HCT116 (cell line): ENCODE measurements at regions of chr19 and their contacts with region 1.

Region 1: GRCh38 chr19:45643024-45643926 is 4.1 kb upstream of the EML2 start:
- DNase-seq: peak; percentile 71
- ATAC-seq: no peak
- H3K4me3 ChIP-seq: peak overlapping the region; percentile 53; a peak in 3 of 4 replicates
- H3K27ac ChIP-seq: peak overlapping the region; percentile 79; the same call in 1 of the 2 replicates
- H3K4me1 ChIP-seq: peaks cover 28 to 68% of the 10 kb centered on the region in 2 experiments
- H3K27me3 ChIP-seq: no peaks in the 10 kb centered on the region
- CTCF ChIP-seq: peak; percentile 97 to 99 (median 99)
- POLR2A ChIP-seq: peak; percentile 21
- RAD21 ChIP-seq: peak; percentile 98

Region 2: GRCh38 chr19:45423589-45424190 is 219.6 kb before region 1 on chr19 and contains the start of gene ERCC1:
- CTCF ChIA-PET with region 1: interaction called, 3 read pairs
- POLR2A ChIA-PET with region 1: interaction called, 3 read pairs
- RAD21 ChIA-PET with region 1: no interaction called
- intact Hi-C with region 1: loop called (anchors 1 kb)
- DNase-seq: peak; percentile 96
- ATAC-seq: peak; percentile 82
- H3K4me3 ChIP-seq: peak within 1 kb of the TSS; percentile 93 to 96
- H3K27ac ChIP-seq: peak within 1 kb of the TSS; percentile 99
- H3K4me1 ChIP-seq: peaks cover 38 to 77% of the 10 kb centered on the region in 2 experiments
- H3K27me3 ChIP-seq: no peaks in the 10 kb centered on the region
- CTCF ChIP-seq: no peak
- POLR2A ChIP-seq: peak; percentile 84
- RAD21 ChIP-seq: no peak
- total RNA-seq, gene ERCC1: 103 TPM

Region 3: DNA sequence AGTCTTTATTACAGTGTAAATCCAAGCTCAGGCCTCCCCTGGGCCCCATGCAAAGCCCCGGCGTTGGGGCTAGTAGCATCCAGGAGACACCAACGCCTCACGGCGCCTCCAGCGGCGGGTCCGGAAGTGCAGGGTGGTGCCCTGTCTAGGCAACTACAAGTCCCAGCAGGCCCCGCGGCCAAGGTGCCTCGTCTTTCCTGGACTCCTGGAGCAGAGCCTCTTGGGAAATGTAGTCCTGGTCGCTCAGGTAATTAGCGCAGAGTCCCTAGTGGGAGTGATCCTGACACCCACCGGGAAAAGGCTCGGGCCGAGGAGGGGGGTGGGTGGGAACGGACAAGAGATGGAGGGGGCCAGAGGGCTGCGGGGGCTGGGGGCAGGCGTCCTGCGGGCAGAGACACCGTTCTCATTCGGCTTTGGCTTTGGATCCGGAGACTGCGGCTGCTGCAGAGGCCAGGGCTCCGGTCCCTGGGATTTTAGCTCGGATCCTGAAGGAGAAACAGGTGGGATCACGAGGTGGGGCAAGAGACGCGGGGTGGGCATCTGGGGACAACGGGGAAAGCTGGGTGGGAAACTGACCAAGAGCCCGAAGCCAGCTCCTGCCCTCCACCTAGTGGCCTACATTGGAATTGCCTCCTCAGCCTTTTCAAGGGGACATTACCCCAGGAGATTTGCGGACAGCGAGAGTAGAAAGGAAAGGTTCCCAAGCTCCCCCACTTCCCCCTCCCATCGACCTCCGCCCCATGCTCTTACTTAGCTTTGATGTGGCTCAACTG is 157.8 kb before region 1 on chr19:
- CTCF ChIA-PET with region 1: interaction called, 16 read pairs
- POLR2A ChIA-PET with region 1: interaction called, 3 read pairs
- RAD21 ChIA-PET with region 1: no interaction called
- intact Hi-C with region 1: loop called (anchors 2 kb)
- DNase-seq: peak; percentile 91
- ATAC-seq: peak; percentile 95
- H3K4me3 ChIP-seq: peak overlapping the region; percentile 41 to 51
- H3K27ac ChIP-seq: peak overlapping the region; percentile 44; the same call in 1 of the 2 replicates
- H3K4me1 ChIP-seq: peaks cover 13 to 28% of the 10 kb centered on the region in 2 experiments
- H3K27me3 ChIP-seq: no peaks in the 10 kb centered on the region
- CTCF ChIP-seq: peak; percentile 68 to 94 (median 86)
- POLR2A ChIP-seq: no peak
- RAD21 ChIP-seq: peak; percentile 64

Region 4: GRCh38 chr19:45558399-45558878 is 84.8 kb before region 1 on chr19:
- CTCF ChIA-PET with region 1: interaction called, 19 read pairs
- POLR2A ChIA-PET with region 1: no interaction called
- RAD21 ChIA-PET with region 1: interaction called, 3 to 6 read pairs
- intact Hi-C with region 1: no loop called
- DNase-seq: peak; percentile 81
- ATAC-seq: peak; percentile 99
- H3K4me3 ChIP-seq: no peak overlapping the region
- H3K27ac ChIP-seq: peak overlapping the region; percentile 38; the same call in 1 of the 2 replicates
- H3K4me1 ChIP-seq: peaks cover 6 to 8% of the 10 kb centered on the region in 2 experiments
- H3K27me3 ChIP-seq: no peaks in the 10 kb centered on the region
- CTCF ChIP-seq: peak; percentile 84 to 97 (median 84)
- POLR2A ChIP-seq: no peak
- RAD21 ChIP-seq: peak; percentile 88

Region 5: DNA sequence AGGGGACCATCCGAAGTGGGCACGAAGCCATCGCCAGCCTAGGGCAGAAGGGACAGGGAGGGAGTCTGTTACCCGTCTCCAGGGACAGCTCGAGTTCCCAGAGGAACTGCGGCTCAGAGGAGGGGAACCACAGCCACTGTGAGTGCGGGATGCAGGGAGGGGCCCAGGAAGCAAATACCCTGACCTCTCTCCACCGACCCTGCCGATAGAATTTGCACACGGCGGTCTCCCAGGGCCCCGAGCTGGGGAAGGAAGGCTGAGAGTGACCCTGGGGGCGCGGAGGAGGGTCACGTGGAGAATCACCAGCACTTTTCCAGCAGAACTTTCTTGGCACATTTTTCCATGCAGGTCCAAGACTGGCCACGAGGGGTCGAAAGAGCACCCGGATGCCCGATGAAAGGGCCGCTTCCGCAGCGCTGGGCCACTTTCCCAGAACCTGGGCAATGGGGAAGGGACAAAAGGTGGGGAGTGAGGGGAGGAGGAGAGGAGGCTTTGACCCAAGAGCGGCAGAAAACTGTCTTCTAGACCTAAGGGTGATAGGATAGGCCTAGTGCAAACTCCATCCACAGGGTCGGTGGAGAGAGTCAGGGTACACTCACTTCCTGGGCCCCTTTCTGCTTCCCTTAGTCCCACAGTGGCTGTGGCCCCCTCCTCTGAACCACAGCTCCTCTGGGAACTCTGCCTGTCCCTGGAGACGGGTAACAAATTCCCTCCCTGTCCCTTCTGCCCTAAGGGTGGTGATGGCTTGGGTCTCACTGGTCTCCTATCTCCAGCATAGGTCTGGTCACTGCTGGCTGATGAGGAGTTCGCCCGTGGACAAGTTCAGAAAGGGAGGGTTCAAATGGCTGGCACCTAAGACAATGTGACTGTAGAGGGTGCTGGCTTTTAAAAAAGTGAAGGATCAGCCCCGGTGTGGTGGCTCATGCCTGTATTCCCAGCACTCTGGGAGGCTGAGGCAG is 35.9 kb before region 1 on chr19:
- CTCF ChIA-PET with region 1: interaction called, 45 read pairs
- POLR2A ChIA-PET with region 1: interaction called, 5 read pairs
- RAD21 ChIA-PET with region 1: interaction called in 1 of 2 experiments, 4 read pairs
- intact Hi-C with region 1: loop called (anchors 5 kb)
- DNase-seq: no peak
- ATAC-seq: peak; percentile 80
- H3K4me3 ChIP-seq: peak overlapping the region in 1 of 2 experiments; percentile 17; a peak in 1 of 4 replicates
- H3K27ac ChIP-seq: peak overlapping the region; percentile 72
- H3K4me1 ChIP-seq: peaks cover 12 to 13% of the 10 kb centered on the region in 2 experiments
- H3K27me3 ChIP-seq: no peaks in the 10 kb centered on the region
- CTCF ChIP-seq: peak; percentile 78 to 93 (median 82)
- POLR2A ChIP-seq: no peak
- RAD21 ChIP-seq: peak; percentile 84

Region 6: DNA sequence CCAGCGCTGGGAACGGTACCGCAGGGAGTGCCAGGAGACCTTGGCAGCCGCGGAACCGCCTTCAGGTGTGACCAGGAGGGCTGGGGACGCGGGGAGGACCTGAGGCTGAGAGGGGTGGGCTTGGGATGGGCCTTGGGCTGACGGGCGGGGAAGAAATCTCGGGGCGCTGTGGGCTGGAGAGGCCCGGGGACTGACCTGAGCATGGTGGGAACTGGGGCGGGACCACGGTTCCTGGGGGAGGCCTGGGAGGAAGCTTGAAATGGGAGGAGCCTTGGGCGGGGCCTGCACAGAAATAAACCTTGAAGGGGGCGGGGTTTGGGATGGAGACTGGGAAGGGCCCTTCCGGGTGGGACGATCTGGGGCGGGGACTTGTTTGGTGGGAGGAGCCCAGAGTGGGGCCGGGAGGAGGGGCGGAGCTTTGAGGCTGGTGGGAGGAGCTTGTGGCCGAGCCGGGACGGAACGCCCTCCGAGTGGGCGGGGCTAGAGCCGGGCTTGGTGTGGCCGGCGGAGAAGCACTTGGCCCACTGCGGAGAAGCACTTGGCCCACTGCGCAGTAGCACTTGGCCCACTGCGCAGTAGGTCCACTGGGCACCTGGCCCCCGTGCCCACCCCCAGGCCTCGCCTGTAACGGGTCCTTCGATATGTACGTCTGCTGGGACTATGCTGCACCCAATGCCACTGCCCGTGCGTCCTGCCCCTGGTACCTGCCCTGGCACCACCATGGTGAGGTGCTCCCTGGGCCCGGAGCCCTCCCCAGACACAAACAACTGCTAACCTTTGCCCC is 27.6 kb after region 1 on chr19:
- CTCF ChIA-PET with region 1: interaction called, 17 read pairs
- POLR2A ChIA-PET with region 1: interaction called, 13 read pairs
- RAD21 ChIA-PET with region 1: interaction called, 5 to 8 read pairs
- intact Hi-C with region 1: no loop called
- DNase-seq: peak; percentile 93
- ATAC-seq: peak; percentile 81
- H3K4me3 ChIP-seq: peak overlapping the region; percentile 76 to 85
- H3K27ac ChIP-seq: peak overlapping the region; percentile 71
- H3K4me1 ChIP-seq: peaks cover 11 to 40% of the 10 kb centered on the region in 2 experiments
- H3K27me3 ChIP-seq: no peaks in the 10 kb centered on the region
- CTCF ChIP-seq: no peak
- POLR2A ChIP-seq: peak; percentile 42
- RAD21 ChIP-seq: no peak